ENCODE measurements at regions of chr17 and their contacts with region 1.

Region 1: DNA sequence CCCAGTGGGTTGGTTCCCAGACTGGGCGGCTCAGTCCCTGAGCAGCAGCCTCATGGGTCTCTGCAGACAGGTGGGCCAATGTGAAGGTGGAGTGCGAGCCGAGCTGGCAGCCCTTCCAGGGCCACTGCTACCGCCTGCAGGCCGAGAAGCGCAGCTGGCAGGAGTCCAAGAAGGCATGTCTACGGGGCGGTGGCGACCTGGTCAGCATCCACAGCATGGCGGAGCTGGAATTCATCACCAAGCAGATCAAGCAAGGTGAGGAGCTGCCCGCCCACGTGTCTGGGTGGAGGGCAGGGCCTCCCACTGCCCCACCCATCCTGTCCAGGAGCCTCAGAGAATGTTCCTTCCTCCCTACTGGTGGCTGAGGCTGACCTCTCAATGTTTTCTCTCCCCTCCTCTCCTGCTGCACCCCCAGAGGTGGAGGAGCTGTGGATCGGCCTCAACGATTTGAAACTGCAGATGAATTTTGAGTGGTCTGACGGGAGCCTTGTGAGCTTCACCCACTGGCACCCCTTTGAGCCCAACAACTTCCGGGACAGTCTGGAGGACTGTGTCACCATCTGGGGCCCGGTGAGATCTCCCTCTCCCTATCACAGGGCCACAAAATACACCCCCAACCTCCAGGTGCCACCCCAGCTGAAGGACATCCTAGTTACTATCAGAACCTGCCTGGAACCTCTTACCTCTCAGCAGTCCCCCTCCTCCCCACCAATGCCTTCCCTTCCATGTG is 44.3 kb downstream of the MRC2 start:
- DNase-seq: peak; percentile 62
- H3K4me3 ChIP-seq: no peak overlapping the region
- H3K27ac ChIP-seq: peak overlapping the region in 1 of 2 experiments; percentile 16; a peak in 1 of 4 replicates
- H3K4me1 ChIP-seq: peaks cover 0 to 20% of the 10 kb centered on the region in 2 experiments; a peak in 1 of 4 replicates
- H3K27me3 ChIP-seq: no peaks in the 10 kb centered on the region
- CTCF ChIP-seq: no peak
- EP300 ChIP-seq: no peak
- RAD21 ChIP-seq: no peak

Region 2: DNA sequence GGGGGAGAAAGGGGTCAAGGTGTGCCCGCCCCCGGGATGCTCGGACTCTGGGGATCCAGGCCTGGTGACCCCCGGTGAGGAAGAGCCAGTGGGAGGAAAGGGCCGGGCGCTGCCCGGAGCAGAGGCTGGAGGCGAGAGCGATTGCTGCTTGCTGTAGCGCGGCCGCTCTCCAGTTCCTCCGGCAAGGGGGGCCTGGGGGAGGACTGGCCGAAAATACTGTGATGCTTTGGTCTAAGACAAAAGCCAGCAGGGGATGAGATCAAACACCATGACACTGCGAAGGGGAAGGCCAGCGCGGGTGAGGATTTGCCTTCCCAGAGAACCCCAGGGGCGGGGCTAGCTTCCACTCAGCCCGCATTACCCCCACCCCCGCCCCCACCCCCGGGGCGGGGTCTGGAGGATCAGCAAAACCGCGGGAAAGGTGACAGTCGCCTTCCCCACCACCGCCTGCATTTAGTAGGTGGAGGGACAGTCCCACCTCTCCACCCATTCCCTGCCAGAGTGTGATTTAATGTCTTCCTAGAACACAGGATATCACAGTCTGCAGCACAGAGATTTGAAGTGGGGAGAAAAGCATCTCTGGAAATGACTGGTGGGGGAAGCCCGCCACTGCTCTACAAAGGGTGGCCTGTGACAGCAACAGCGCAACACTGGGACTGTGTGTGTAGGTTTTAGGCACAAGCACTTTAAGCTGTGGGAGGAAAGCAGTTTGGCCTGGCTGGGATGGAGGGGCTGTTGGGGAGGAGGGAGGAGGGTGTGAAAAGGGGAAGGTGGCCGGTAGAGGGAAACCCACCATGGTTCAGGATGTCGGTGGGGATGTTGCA is 18.5 kb before region 1 on chr17:
- CTCF ChIA-PET with region 1: interaction called, 27 read pairs
- POLR2A ChIA-PET with region 1: no interaction called
- DNase-seq: peak; percentile 97
- H3K4me3 ChIP-seq: peak overlapping the region; percentile 47 to 60
- H3K27ac ChIP-seq: peak overlapping the region; percentile 88 to 93
- H3K4me1 ChIP-seq: peaks cover 25 to 36% of the 10 kb centered on the region in 2 experiments
- H3K27me3 ChIP-seq: no peaks in the 10 kb centered on the region
- CTCF ChIP-seq: no peak
- EP300 ChIP-seq: no peak
- RAD21 ChIP-seq: no peak

Region 3: DNA sequence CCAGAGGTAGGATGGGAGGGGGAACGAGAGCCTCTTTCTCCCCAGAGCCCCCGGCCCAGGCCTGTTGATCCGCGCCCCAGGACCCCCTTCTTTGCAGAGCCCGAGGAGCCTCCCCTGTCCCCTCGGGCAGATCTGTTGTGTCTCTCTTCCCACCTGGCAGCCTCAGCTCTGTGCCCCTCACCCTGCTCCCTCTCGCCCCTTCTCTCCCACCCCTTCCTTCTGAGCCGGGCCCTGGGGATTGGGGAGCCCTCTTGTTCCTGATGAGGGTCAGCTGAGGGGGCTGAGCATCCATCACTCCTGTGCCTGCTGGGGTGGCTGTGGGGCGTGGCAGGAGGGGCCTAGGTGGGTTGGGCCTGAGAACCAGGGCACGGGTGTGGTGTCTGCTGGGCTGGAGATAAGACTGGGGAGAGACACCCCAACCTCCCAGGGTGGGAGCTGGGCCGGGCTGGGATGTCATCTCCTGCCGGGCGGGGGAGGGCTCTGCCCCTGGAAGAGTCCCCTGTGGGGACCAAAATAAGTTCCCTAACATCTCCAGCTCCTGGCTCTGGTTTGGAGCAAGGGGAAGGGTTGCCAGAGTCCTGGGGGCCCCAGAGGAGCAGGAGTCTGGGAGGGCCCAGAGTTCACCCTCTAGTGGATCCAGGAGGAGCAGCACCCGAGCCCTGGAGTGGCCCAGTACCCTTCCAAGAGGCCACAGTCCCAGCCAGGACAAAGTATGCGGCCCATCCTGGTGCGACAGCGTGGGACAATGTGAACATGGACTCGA is 21.2 kb after region 1 on chr17:
- CTCF ChIA-PET with region 1: interaction called, 67 read pairs
- POLR2A ChIA-PET with region 1: no interaction called
- DNase-seq: peak; percentile 82
- H3K4me3 ChIP-seq: no peak overlapping the region
- H3K27ac ChIP-seq: no peak overlapping the region; a peak in 1 of 4 replicates
- H3K4me1 ChIP-seq: peaks cover 0 to 24% of the 10 kb centered on the region in 2 experiments; a peak in 1 of 4 replicates
- H3K27me3 ChIP-seq: no peaks in the 10 kb centered on the region
- CTCF ChIP-seq: peak; percentile 62
- EP300 ChIP-seq: no peak
- RAD21 ChIP-seq: peak; percentile 45

Region 4: GRCh38 chr17:62778689-62779681 is 107.2 kb after region 1 on chr17:
- CTCF ChIA-PET with region 1: no interaction called
- POLR2A ChIA-PET with region 1: no interaction called
- DNase-seq: peak; percentile 45
- H3K4me3 ChIP-seq: no peak overlapping the region
- H3K27ac ChIP-seq: peak overlapping the region in 1 of 2 experiments; percentile 35; a peak in 3 of 4 replicates
- H3K4me1 ChIP-seq: peaks cover 0 to 7% of the 10 kb centered on the region in 2 experiments; a peak in 1 of 4 replicates
- H3K27me3 ChIP-seq: no peaks in the 10 kb centered on the region
- CTCF ChIP-seq: no peak
- EP300 ChIP-seq: no peak; a peak in 1 of 4 replicates
- RAD21 ChIP-seq: no peak

Measured in SK-N-SH (cell line).